Panc1 (cell line): ENCODE measurements at regions of chrX and their contacts with region 1.

Region 1: GRCh38 chrX:65034668-65035445 is 58.6 kb upstream of the ZC4H2 start:
- DNase-seq: no peak
- ATAC-seq: peak; percentile 97
- H3K4me3 ChIP-seq: peak within 1 kb of the TSS; percentile 66 to 87
- H3K27ac ChIP-seq: peak within 1 kb of the TSS; percentile 83
- H3K4me1 ChIP-seq: peaks cover 4% of the 10 kb centered on the region; the same call in 1 of the 2 replicates
- H3K27me3 ChIP-seq: no peaks in the 10 kb centered on the region
- CTCF ChIP-seq: peak; percentile 83

Region 2: DNA sequence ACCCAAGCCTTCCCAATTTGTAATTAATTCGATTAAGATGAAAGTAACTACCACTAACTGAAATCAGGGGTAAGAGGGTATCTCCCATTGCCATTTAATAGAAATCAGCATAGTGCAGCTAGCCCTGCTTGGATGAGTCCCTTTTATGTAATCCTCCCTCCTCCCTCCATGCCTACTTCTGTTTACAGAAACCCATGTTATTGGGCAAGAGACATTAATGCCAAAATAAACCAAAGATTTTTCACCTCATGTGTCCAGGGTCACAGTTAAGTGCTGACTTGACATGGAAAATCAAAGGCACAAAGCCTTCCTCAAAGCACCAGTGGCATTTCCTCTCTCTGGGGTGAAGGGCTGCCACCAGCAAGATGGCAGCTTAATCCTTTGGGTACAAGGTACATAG is 109.4 kb before region 1 on chrX:
- CTCF ChIA-PET with region 1: no interaction called
- POLR2A ChIA-PET with region 1: no interaction called
- in situ Hi-C with region 1: no loop called
- intact Hi-C with region 1: no loop called
- DNase-seq: no peak
- ATAC-seq: no peak
- H3K4me3 ChIP-seq: no peak overlapping the region
- H3K27ac ChIP-seq: no peak overlapping the region
- H3K4me1 ChIP-seq: no peaks in the 10 kb centered on the region
- H3K27me3 ChIP-seq: no peaks in the 10 kb centered on the region
- CTCF ChIP-seq: no peak

Region 3: DNA sequence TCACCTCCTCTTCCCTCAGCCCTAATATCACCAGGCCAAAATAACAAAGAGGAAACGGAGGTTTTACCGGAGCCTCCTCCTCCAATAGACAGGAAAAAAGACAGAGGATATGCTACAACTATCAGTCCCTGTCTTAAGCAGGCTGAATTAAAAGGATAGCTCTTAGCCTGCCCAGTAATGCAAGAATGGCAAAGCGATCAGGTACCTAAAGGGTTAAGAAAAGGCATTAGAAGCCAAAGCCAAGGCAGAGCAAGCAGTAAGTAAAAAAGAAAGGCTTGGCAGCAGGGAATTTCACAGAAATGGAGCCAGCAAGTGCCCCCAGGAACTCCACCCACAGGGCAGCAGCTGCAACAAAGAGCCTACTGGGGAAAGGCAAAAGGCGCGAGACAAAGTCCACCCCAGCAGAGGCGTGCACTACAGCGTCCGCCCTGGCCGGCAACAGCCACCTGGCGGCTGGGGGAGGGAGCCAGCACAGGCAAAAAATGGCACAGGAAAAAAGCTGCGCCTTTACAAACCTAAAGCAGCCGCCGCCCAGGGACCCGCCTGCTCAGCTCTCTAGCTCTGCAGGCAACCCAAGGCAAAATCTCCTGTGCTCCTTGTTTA is 162.0 kb after region 1 on chrX:
- CTCF ChIA-PET with region 1: interaction called, 4 read pairs
- POLR2A ChIA-PET with region 1: no interaction called
- in situ Hi-C with region 1: no loop called
- intact Hi-C with region 1: loop called (anchors 2 kb)
- DNase-seq: no peak
- ATAC-seq: peak; percentile 97
- H3K4me3 ChIP-seq: peak overlapping the region; percentile 13 to 43
- H3K27ac ChIP-seq: peak overlapping the region; percentile 66
- H3K4me1 ChIP-seq: peaks cover 12% of the 10 kb centered on the region
- H3K27me3 ChIP-seq: no peaks in the 10 kb centered on the region
- CTCF ChIP-seq: peak; percentile 65